Activated CD4-positive, alpha-beta T cell treated with anti-CD3 and anti-CD28 coated beads for 36 hours (primary cell): ENCODE measurements at regions of chr1 and their contacts with region 1.

Region 1: DNA sequence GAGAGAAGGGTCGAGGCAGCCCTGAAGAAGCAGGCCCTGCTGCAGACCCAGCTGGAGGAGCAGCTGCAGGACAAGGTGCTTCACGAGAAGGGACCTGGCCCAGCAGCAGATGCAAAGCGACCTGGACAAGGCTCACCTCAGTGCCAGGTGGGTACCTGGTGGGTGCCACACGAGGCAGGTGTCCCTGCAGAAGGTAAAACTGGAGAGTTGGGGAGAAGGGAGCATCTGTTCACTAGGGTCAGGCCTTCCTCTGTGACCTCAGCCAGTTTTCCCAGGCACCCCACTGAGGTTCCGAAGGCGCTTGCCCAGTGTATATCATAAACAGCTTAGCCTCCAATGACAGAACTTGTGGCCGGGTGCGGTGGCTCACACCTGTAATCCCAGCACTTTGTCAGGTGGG is 5.5 kb upstream of the NBPF3 start:
- DNase-seq: no peak
- ATAC-seq: no peak
- H3K4me3 Mint-ChIP-seq: no peak overlapping the region
- H3K27ac Mint-ChIP-seq: no peak overlapping the region
- H3K4me1 Mint-ChIP-seq: peaks cover 3% of the 10 kb centered on the region
- H3K27me3 Mint-ChIP-seq: peaks cover 4% of the 10 kb centered on the region

Region 2: GRCh38 chr1:21478974-21479373 is 44.6 kb after region 1 on chr1:
- CTCF ChIA-PET with region 1: no interaction called
- POLR2A ChIA-PET with region 1: no interaction called
- intact Hi-C with region 1: loop called in 1 of 2 experiments (anchors 5 kb)
- DNase-seq: no peak
- ATAC-seq: no peak
- H3K4me3 Mint-ChIP-seq: no peak overlapping the region
- H3K27ac Mint-ChIP-seq: no peak overlapping the region
- H3K4me1 Mint-ChIP-seq: no peaks in the 10 kb centered on the region
- H3K27me3 Mint-ChIP-seq: peaks cover 2% of the 10 kb centered on the region